CD8-positive, alpha-beta T cell (primary cell): ENCODE measurements at regions of chrX and their contacts with region 1.

Region 1: DNA sequence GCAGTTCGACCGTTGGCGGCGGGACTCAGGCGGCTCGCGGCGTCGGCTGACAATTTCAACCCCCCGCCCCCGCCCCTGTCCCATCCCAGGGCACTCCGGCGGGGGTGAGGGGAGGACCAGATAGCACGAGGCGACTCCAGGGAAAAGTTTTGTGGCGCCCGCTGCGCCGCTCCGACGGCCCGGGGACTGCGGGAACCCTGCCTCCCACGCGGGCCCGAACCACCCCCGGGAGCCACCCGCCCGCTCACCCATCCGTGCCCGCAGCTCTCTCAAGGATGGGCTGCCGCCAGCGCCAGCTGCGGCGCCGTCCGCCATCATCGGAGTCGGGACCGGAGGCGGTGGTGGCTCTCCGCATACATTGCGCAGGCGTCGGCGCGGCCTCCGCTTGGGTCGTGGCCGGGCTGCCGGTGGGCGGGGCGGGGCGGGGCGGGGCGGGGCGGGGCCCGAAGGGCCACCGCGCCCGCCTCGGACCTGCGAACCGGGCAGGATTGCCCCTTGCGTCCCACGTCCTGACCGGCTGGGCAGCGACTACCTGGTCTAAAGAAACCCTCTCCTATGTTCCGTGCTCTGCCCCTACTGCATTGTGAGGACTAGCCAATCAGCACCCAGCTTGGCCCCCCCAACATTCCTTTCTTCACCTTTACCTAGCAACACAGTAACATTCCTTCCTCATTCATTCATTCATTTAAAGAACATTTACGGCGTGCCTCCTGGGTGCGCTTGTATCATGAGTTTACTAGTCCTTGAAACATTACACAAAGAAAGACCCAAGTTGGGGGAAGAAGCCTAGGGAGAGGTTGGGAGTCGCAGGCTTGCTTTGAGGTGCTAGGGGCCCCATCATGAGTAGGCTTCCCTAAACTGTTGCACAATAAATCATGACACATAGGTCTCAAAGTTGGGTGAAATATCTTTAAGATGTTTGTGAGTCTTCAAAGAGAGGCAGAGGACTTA is at the start of gene MAP7D3:
- DNase-seq: peak; percentile 27 to 85 (median 67)
- ATAC-seq: peak; percentile 91
- H3K4me3 ChIP-seq: peak within 1 kb of the TSS; percentile 56 to 71
- H3K4me3 Mint-ChIP-seq: peak within 1 kb of the TSS; percentile 92
- H3K27ac ChIP-seq: peak within 1 kb of the TSS in 1 of 2 experiments; percentile 37
- H3K27ac Mint-ChIP-seq: peak within 1 kb of the TSS; percentile 84
- H3K4me1 ChIP-seq: peaks cover 11% of the 10 kb centered on the region
- H3K4me1 Mint-ChIP-seq: peaks cover 13% of the 10 kb centered on the region
- H3K27me3 ChIP-seq: no peaks in the 10 kb centered on the region
- H3K27me3 Mint-ChIP-seq: no peaks in the 10 kb centered on the region
- CTCF ChIP-seq: no peak
- total RNA-seq, gene MAP7D3: 3.6 TPM

Region 2: GRCh38 chrX:136909706-136910564 is 658.6 kb after region 1 on chrX:
- CTCF ChIA-PET with region 1: no interaction called
- POLR2A ChIA-PET with region 1: no interaction called
- intact Hi-C with region 1: loop called in 1 of 2 experiments (anchors 10 kb)
- DNase-seq: peak; percentile 12 to 82 (median 60)
- ATAC-seq: peak; percentile 65
- H3K4me3 ChIP-seq: peak overlapping the region; percentile 46 to 73
- H3K4me3 Mint-ChIP-seq: peak overlapping the region; percentile 92
- H3K27ac ChIP-seq: peak overlapping the region; percentile 33 to 80
- H3K27ac Mint-ChIP-seq: peak overlapping the region; percentile 85
- H3K4me1 ChIP-seq: no peaks in the 10 kb centered on the region
- H3K4me1 Mint-ChIP-seq: peaks cover 20% of the 10 kb centered on the region
- H3K27me3 ChIP-seq: no peaks in the 10 kb centered on the region
- H3K27me3 Mint-ChIP-seq: no peaks in the 10 kb centered on the region
- CTCF ChIP-seq: no peak